Common myeloid progenitor, CD34-positive (primary cell): ENCODE measurements at regions of chr20 and their contacts with region 1.

Region 1: DNA sequence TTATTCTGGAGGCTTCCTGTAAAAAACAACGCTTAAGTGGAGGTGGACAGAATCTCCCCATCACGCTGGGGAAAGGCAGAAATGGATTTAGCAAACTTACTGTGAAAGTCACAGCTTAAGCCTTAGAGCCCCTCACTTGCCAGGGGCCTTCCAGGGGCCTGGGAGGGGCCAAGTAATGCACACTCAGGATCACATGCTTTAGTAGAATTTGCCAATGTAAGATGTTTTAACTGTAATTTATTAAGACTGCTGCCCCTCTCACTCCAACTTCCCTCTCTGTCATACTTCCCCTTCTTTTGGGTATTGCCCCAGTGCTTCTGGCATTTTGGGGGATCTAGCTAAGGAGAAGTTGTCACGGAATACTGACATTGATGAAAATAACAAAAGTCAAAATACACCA is 12.6 kb upstream of the ADA start:
- DNase-seq: peak; percentile 78 to 94 (median 91)
- H3K4me3 ChIP-seq: peak overlapping the region in 2 of 7 experiments; percentile 21 to 37
- H3K27ac ChIP-seq: peak overlapping the region; percentile 66 to 73
- H3K4me1 ChIP-seq: peaks cover 14 to 51% (median 34%) of the 10 kb centered on the region in 4 experiments
- H3K27me3 ChIP-seq: no peaks in the 10 kb centered on the region

Region 2: GRCh38 chr20:44651684-44652423 is 12.3 kb before region 1 on chr20 and contains the start of gene ADA:
- CTCF ChIA-PET with region 1: interaction called, 22 read pairs
- POLR2A ChIA-PET with region 1: interaction called, 3 read pairs
- DNase-seq: peak in 2 of 3 donors; percentile 63 to 76
- H3K4me3 ChIP-seq: peak within 1 kb of the TSS; percentile 82 to 99 (median 92)
- H3K27ac ChIP-seq: peak within 1 kb of the TSS; percentile 25 to 75
- H3K4me1 ChIP-seq: peaks cover 7 to 74% (median 56%) of the 10 kb centered on the region in 4 experiments
- H3K27me3 ChIP-seq: no peaks in the 10 kb centered on the region

Region 3: DNA sequence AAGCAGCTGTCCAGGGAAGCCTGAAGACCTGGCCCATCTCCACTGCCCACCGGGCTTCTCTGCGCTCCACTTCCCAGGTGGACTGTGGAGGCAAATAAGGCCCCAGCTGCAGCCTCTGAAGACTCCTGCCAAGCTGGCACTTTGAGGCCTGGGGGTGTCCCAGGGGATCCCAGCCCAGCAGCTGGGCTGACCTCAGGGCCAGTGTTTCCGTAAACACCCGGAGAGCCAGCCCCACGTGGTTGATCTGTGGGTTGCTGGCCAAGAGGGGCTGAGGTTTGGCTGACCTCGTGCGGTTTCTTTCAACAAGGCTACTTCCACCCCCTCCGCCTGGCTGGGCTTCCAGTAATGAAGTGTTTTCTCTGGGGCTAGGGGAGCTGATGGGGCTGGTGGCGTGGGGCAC is 38.6 kb after region 1 on chr20:
- CTCF ChIA-PET with region 1: no interaction called
- POLR2A ChIA-PET with region 1: no interaction called
- DNase-seq: peak in 2 of 3 donors; percentile 35 to 44
- H3K4me3 ChIP-seq: peak overlapping the region in 2 of 7 experiments; percentile 6 to 19
- H3K27ac ChIP-seq: no peak overlapping the region
- H3K4me1 ChIP-seq: peaks cover 0 to 13% (median 12%) of the 10 kb centered on the region in 4 experiments
- H3K27me3 ChIP-seq: no peaks in the 10 kb centered on the region